ENCODE measurements at regions of chr2 and their contacts with region 1.

Region 1: GRCh38 chr2:30252723-30253701 is 21.7 kb downstream of the LBH start:
- DNase-seq: peak; percentile 87
- H3K4me3 Mint-ChIP-seq: peak overlapping the region; percentile 14
- H3K27ac Mint-ChIP-seq: peak overlapping the region; percentile 81
- H3K4me1 Mint-ChIP-seq: peaks cover 94% of the 10 kb centered on the region
- H3K27me3 Mint-ChIP-seq: no peaks in the 10 kb centered on the region

Region 2: GRCh38 chr2:30231212-30231995 is 21.6 kb before region 1 on chr2 and contains the start of gene LBH:
- CTCF ChIA-PET with region 1: interaction called, 68 read pairs
- intact Hi-C with region 1: loop called (anchors 1 kb)
- DNase-seq: peak; percentile 90
- H3K4me3 Mint-ChIP-seq: peak within 1 kb of the TSS; percentile 83
- H3K27ac Mint-ChIP-seq: peak within 1 kb of the TSS; percentile 74
- H3K4me1 Mint-ChIP-seq: peaks cover 56% of the 10 kb centered on the region
- H3K27me3 Mint-ChIP-seq: peaks cover 3% of the 10 kb centered on the region
- total RNA-seq, gene LBH: 71.4 to 75.3 TPM

Region 3: DNA sequence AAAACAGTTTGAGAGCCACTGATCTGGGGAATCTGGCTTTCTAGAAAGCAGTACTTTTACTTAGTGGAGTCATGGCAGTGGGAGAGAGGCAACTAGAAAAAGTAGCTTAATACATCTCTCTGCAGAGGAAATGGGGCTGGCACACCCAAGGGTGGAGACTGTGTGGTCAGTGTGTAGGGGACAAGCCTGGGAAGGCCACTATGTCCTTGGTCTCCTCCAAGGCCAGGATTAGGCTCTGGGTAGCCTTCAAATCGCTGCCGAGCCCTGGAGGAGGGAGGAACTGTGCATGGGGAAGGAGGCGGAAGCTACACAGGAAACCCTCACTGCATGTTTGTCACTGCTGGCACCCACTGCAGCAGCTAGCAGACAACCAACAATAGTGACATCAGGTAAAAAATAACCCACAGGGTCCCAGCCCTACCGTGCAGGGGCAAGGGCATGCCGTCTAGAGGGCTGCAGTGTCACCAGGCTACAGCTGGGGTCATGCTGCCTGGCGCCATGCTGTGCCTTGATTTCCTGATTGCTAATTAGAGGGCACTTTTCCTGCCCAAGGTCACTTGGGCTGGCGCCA is 13.1 kb after region 1 on chr2:
- CTCF ChIA-PET with region 1: interaction called, 3 read pairs
- intact Hi-C with region 1: loop called (anchors 1 kb)
- DNase-seq: peak; percentile 73
- H3K4me3 Mint-ChIP-seq: peak overlapping the region; percentile 79
- H3K27ac Mint-ChIP-seq: peak overlapping the region; percentile 89
- H3K4me1 Mint-ChIP-seq: peaks cover 81% of the 10 kb centered on the region
- H3K27me3 Mint-ChIP-seq: no peaks in the 10 kb centered on the region

Region 4: DNA sequence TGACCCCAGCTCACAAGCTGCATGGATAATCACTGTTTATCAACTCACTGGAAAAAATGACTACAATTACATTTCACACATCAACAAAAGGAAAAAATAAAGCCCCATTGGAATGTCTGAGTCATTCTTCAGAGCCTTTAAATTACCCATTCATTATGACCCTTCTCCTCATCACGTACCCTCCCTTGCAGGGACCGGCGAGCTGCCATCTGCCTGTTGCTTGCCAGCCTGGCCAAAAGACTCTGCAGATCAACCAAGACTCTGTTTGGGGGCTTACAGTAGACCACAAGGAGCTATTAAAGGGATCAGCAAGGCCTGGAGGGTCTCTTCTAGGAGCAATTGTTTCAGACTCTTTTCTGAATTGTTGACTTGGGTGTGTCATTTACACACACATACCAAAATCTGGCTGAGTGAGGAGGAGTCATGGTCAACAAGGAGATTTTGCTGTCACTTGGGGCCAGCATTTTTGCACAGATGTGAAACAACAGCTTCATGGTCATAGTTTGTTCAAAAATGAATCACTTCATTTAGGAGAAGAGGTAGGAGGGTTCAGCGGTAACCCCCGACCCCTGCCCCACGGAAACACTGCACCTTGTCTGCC is 20.3 kb after region 1 on chr2:
- CTCF ChIA-PET with region 1: interaction called, 3 read pairs
- intact Hi-C with region 1: loop called (anchors 1 kb)
- DNase-seq: peak; percentile 60
- H3K4me3 Mint-ChIP-seq: no peak overlapping the region
- H3K27ac Mint-ChIP-seq: peak overlapping the region; percentile 68
- H3K4me1 Mint-ChIP-seq: peaks cover 78% of the 10 kb centered on the region
- H3K27me3 Mint-ChIP-seq: no peaks in the 10 kb centered on the region

Measured in activated naive CD4-positive, alpha-beta T cell treated with anti-CD3 and anti-CD28 coated beads for 36 hours (primary cell).